Dorsolateral prefrontal cortex (tissue), 120 donors: ENCODE measurements at regions of chr9 and their contacts with region 1.

Region 1: DNA sequence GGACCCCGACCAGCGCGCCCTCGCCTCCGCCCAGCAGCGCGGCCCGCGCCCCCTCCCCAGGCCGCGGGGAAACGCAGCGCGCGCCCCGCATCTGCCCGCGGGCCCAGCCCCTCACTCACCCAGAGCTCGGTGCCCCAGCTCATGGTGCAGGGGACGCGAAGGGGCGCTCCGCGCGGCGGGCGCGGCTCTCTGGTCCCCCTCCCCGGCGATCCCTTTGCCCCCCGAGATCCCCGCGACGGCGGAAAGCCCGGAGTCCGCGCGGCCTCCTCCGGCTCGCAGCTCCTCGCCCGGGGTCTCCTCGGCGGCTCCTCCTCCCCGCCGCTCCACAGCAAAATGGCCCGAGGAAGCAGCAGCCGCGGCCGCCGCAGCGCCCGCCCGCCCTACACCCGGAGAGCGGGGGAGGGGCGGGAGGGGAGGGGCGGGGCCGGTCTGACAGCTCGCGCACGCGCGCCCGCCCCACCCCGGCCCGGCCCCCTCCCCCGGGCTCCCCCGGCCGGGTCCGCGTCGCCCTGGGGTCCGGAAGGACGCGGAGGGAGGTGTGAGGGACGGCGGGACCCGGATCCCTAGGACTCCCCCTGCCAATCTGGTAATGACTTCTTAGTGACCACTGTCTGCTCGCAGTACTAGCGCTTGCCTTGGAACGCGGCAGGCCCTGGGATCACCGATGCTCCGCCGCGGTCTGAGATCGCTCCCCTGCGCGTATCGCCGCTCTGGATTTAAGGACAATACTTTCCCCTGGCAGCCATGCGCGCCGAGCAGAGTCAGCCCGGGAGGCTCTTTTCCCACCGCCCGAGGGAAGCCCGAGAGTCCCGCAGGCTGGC is at the start of gene FNBP1:
- DNase-seq: peak; percentile 65 to 86 (median 75)
- H3K4me3 ChIP-seq: peak within 1 kb of the TSS; percentile 50 to 95 (median 87)
- H3K27ac ChIP-seq: peak within 1 kb of the TSS; percentile 84 to 97 (median 95)
- H3K27me3 ChIP-seq: no peaks in the 10 kb centered on the region
- CTCF ChIP-seq: peak in 16 of 56 donors; percentile 0 to 37 (median 14)
- total RNA-seq, gene FNBP1: 53.9 to 197 (median 99.8) TPM

Region 2: GRCh38 chr9:129932303-129933151 is 110.5 kb before region 1 on chr9:
- intact Hi-C with region 1: loop called (anchors 5 to 10 kb)
- DNase-seq: peak in 1 of 10 donors; percentile 77
- H3K4me3 ChIP-seq: peak overlapping the region in 11 of 59 donors; percentile 0 to 38 (median 10)
- H3K27ac ChIP-seq: peak overlapping the region; percentile 38 to 96 (median 88)
- H3K27me3 ChIP-seq: no peaks in the 10 kb centered on the region
- CTCF ChIP-seq: no peak

Region 3: GRCh38 chr9:129944506-129945116 is 98.4 kb before region 1 on chr9:
- intact Hi-C with region 1: loop called in 1 of 2 experiments (anchors 5 kb)
- DNase-seq: no peak
- H3K4me3 ChIP-seq: no peak overlapping the region
- H3K27ac ChIP-seq: peak overlapping the region; percentile 51 to 99 (median 91)
- H3K27me3 ChIP-seq: no peaks in the 10 kb centered on the region
- CTCF ChIP-seq: no peak

Region 4: DNA sequence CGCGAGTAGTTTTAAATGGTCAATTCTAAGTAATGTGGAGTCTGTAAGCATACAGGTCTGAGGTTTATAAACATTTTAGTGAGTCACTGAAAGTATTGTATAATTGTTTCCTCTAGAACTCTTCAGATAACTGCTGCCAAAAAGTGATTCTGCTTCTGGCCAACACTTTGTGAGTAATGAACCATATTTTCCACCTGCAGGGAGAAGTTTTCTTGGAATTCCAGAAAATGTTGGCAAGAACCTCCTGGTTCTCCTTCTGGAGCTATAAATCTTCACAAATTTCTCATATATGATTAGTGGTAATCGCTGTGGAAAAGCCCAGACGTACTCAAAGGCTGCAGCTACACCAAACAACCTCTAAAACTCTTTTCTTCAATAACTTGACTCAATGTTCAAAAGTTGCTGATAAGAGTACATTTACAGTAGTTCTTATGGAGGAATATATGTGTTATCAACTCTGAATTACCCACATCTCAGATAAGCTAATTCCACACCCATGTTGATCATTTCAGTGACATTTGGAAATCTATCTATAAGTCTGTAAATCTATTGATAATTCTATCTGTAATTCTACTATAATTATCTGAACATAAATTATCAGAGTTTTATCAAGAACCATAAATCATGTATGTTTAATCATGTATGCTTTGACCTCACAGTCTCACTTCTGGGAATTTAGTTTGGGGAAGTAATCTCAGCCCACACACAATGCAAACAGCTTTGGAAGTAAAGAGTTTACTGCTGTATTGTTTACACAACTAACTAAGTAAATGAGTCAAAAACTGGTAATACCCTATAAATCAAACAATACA is 74.1 kb before region 1 on chr9:
- intact Hi-C with region 1: loop called (anchors 5 kb)
- DNase-seq: no peak
- H3K4me3 ChIP-seq: no peak overlapping the region
- H3K27ac ChIP-seq: peak overlapping the region in 52 of 59 donors; percentile 1 to 99 (median 53)
- H3K27me3 ChIP-seq: no peaks in the 10 kb centered on the region
- CTCF ChIP-seq: no peak

Region 5: DNA sequence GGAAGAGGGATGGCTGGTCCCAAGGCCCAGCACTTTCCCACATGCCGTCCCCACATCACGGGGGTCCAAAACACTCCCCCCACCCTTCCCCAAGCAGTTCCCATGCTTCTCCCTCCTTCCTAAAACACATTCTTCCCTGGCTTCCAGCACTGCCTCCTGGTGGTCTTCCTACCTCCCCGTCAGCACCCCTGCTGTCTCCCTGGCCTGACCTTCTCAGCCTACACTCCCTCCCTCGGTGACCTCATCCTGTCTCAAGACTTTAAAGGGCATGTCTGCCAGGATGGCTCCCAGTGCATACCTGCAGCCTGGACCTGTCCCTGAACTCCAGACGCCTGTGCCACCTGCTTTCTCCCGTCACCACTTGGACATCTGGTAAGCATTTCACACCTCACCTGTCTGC is 124.9 kb after region 1 on chr9:
- intact Hi-C with region 1: no loop called
- DNase-seq: no peak
- H3K4me3 ChIP-seq: no peak overlapping the region
- H3K27ac ChIP-seq: no peak overlapping the region
- H3K27me3 ChIP-seq: no peaks in the 10 kb centered on the region
- CTCF ChIP-seq: no peak